Activated T-helper 1 cell treated with anti-CD3 and anti-CD28 coated beads, Interleukin-12 subunit alpha, Interleukin-12 subunit beta, Interleukin-2, Interleukin-4 antibody, amounts not matched to agents 30 ng/mL and 10 ng/mL and 1 ng/mL, durations not matched to agents 14 hours and 24 hours and 36 hours (primary cell): ENCODE measurements at regions of chr7 and their contacts with region 1.

Region 1: DNA sequence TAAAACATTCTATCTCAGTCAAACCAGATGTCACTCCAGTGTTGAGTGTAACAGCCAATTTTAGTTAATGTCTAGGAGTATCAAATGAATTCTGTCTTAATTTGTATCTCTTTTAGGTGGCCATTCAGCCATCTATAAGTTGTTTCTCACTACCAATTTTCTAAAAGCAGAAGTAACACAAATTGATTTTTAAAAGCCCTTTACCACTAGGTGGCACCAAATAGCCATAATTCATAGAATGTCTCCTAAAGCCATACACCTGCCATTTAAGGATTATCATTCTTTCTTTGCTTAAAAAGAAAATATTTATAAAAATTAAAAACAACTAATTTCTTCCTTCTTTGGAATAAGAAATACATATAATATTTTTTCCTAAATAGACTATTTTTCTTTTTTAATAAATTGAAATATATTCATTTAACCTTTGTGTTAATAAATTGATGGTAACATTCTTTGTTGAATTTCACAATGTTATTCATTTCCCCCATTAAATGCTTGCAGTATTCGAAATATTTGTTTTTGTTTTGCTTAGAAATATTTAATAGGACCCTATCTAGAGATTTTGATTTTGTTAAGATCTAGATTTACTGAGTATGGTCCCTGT is 107.8 kb upstream of the PPP1R3A start:
- DNase-seq: no peak
- H3K4me3 Mint-ChIP-seq: no peak overlapping the region
- H3K27ac Mint-ChIP-seq: no peak overlapping the region
- H3K4me1 Mint-ChIP-seq: no peaks in the 10 kb centered on the region
- H3K27me3 Mint-ChIP-seq: peaks cover 4% of the 10 kb centered on the region

Region 2: GRCh38 chr7:113968713-113969112 is 57.9 kb before region 1 on chr7:
- intact Hi-C with region 1: no loop called
- DNase-seq: no peak
- H3K4me3 Mint-ChIP-seq: no peak overlapping the region
- H3K27ac Mint-ChIP-seq: no peak overlapping the region
- H3K4me1 Mint-ChIP-seq: no peaks in the 10 kb centered on the region
- H3K27me3 Mint-ChIP-seq: no peaks in the 10 kb centered on the region

Region 3: DNA sequence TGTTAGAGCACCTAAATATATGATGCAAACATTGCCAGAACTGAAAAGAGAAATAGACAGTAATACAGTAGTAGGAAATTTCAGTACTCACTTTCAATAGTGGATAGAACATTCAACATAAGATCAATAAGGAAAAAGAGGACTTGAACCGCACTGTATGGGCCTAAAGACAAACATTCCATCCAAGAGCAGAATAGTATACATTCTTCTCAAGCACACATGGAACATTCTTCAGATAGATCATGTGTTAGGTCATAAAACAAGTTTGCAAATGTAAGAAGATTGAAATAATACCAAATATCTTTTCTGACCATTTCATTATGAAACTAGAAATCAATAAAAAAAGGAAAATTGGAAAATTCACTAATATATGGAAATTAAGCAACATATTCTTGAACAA is 202.7 kb after region 1 on chr7:
- intact Hi-C with region 1: loop called (anchors 10 kb)
- DNase-seq: no peak
- H3K4me3 Mint-ChIP-seq: no peak overlapping the region
- H3K27ac Mint-ChIP-seq: no peak overlapping the region
- H3K4me1 Mint-ChIP-seq: no peaks in the 10 kb centered on the region
- H3K27me3 Mint-ChIP-seq: no peaks in the 10 kb centered on the region

Region 4: GRCh38 chr7:114405427-114405826 is 378.8 kb after region 1 on chr7:
- intact Hi-C with region 1: loop called (anchors 5 kb)
- DNase-seq: no peak
- H3K4me3 Mint-ChIP-seq: no peak overlapping the region
- H3K27ac Mint-ChIP-seq: no peak overlapping the region
- H3K4me1 Mint-ChIP-seq: no peaks in the 10 kb centered on the region
- H3K27me3 Mint-ChIP-seq: no peaks in the 10 kb centered on the region

Region 5: GRCh38 chr7:115748131-115748738 is 1721.6 kb after region 1 on chr7:
- intact Hi-C with region 1: loop called (anchors 5 kb)
- DNase-seq: no peak
- H3K4me3 Mint-ChIP-seq: no peak overlapping the region
- H3K27ac Mint-ChIP-seq: no peak overlapping the region
- H3K4me1 Mint-ChIP-seq: no peaks in the 10 kb centered on the region
- H3K27me3 Mint-ChIP-seq: no peaks in the 10 kb centered on the region

Region 6: GRCh38 chr7:115851291-115851690 is 1824.7 kb after region 1 on chr7:
- intact Hi-C with region 1: loop called (anchors 1 kb)
- DNase-seq: no peak
- H3K4me3 Mint-ChIP-seq: no peak overlapping the region
- H3K27ac Mint-ChIP-seq: no peak overlapping the region
- H3K4me1 Mint-ChIP-seq: no peaks in the 10 kb centered on the region
- H3K27me3 Mint-ChIP-seq: no peaks in the 10 kb centered on the region

Region 7: GRCh38 chr7:115910541-115911164 is 1884.1 kb after region 1 on chr7:
- intact Hi-C with region 1: loop called (anchors 1 kb)
- DNase-seq: no peak
- H3K4me3 Mint-ChIP-seq: no peak overlapping the region
- H3K27ac Mint-ChIP-seq: no peak overlapping the region
- H3K4me1 Mint-ChIP-seq: no peaks in the 10 kb centered on the region
- H3K27me3 Mint-ChIP-seq: peaks cover 3% of the 10 kb centered on the region